Heart left ventricle (tissue), 16 donors: ENCODE measurements at regions of chr1 and their contacts with region 1.

Region 1: DNA sequence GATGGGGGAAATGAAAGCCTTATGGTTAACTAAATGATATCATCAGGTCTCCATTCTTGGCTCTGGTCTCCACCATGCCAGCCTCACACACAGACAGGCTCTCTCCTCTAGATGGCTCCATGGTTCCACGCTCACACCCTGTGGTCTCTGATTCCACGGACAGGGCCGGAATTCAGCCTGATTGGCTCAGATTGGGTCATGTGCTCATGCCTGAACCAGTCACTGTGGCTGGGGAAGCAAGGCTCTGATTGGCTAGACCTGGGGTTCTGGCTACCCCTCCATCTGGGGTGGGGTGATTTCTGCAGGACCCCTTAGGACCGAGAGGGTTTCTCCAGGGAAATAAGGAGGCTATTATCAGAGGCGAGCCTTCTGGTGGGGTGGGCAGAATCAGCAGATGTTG is 277.0 kb downstream of the PTPRU start:
- DNase-seq: peak in 2 of 5 donors; percentile 47 to 59
- ATAC-seq: peak; percentile 75 to 94 (median 84)
- H3K4me3 ChIP-seq: no peak overlapping the region
- H3K27ac ChIP-seq: no peak overlapping the region
- H3K4me1 ChIP-seq: no peaks in the 10 kb centered on the region
- H3K27me3 ChIP-seq: peaks cover 0 to 18% (median 6%) of the 10 kb centered on the region in 9 donors
- CTCF ChIP-seq: peak in 11 of 12 donors; percentile 14 to 60 (median 44)
- POLR2A ChIP-seq: no peak

Region 2: DNA sequence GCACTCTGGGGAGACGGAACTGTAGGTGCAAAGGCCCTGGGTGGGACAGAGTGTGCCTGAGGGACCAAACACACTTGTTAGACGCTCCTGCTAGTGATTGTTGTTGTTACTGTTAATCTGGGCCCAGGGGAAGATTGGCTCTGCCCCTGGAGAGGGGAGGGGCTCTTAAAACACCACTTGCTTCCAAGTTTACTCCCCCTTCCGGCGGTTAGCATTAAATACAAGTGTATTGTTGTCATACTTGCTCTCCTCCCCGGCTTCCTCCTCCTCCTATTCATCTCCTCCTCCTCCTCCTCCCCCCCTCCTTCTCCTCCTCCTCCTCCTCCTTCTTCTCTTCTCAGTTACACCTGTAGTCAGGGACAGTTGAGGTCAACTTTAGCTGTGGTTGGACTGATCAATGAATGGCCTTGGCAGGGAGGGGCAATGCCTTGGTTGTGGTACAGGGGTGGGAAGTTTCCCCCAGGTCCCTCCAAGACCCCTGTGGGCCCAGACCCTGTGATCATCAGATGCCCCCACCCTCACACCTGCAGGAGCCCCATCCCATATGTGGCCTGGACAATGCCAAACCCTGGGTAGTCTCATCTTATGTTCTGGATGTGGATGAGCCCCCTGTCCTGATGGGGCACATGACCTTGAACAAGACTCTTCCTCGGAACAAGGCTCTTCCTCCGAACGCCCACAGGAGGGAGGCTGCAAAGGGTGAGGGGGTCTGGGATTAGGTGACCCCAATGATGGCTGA is 59.7 kb before region 1 on chr1:
- intact Hi-C with region 1: loop called in 1 of 10 experiments (anchors 10 kb)
- DNase-seq: no peak
- ATAC-seq: peak in 1 of 4 donors; percentile 56
- H3K4me3 ChIP-seq: no peak overlapping the region
- H3K27ac ChIP-seq: no peak overlapping the region
- H3K4me1 ChIP-seq: no peaks in the 10 kb centered on the region
- H3K27me3 ChIP-seq: peaks cover 0 to 28% (median 0%) of the 10 kb centered on the region in 9 donors
- CTCF ChIP-seq: peak in 7 of 12 donors; percentile 7 to 38 (median 21)
- POLR2A ChIP-seq: no peak

Region 3: GRCh38 chr1:30085811-30086770 is 572.7 kb after region 1 on chr1:
- intact Hi-C with region 1: loop called in 1 of 10 experiments (anchors 10 kb)
- DNase-seq: peak in 4 of 5 donors; percentile 47 to 80 (median 56)
- ATAC-seq: peak in 3 of 4 donors; percentile 27 to 59 (median 47)
- H3K4me3 ChIP-seq: peak overlapping the region in 4 of 12 donors; percentile 5 to 39 (median 29)
- H3K27ac ChIP-seq: peak overlapping the region in 1 of 12 donors; percentile 4
- H3K4me1 ChIP-seq: peaks cover 4 to 42% (median 24%) of the 10 kb centered on the region in 12 donors
- H3K27me3 ChIP-seq: peaks cover 0 to 18% (median 0%) of the 10 kb centered on the region in 9 donors
- CTCF ChIP-seq: peak; percentile 31 to 76 (median 61)
- POLR2A ChIP-seq: no peak

Region 4: DNA sequence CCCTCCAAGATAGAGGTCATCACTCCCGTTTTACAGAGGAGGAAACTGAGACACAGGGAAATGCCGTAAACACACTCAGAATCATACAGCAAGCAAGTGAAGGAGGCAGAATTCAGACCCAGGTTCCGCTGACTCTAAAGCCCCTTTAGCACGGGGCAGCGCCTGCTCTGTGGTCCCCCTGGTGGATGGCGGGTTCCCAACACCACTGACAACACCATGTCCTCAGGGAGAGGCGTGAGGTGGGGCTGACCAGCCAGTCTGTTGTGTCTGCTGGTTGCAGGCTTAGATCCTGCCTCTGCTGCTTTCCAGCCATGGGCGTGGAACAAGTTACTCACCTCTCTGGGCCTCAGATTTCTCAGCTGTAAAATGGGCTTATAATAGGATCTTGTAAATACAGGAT is 592.8 kb after region 1 on chr1:
- intact Hi-C with region 1: loop called in 5 of 10 experiments (anchors 5 to 10 kb)
- DNase-seq: peak in 1 of 5 donors; percentile 28
- ATAC-seq: peak in 3 of 4 donors; percentile 35 to 70 (median 65)
- H3K4me3 ChIP-seq: no peak overlapping the region
- H3K27ac ChIP-seq: no peak overlapping the region
- H3K4me1 ChIP-seq: no peaks in the 10 kb centered on the region
- H3K27me3 ChIP-seq: peaks cover 0 to 67% (median 11%) of the 10 kb centered on the region in 9 donors
- CTCF ChIP-seq: peak; percentile 19 to 65 (median 35)
- POLR2A ChIP-seq: no peak

Region 5: DNA sequence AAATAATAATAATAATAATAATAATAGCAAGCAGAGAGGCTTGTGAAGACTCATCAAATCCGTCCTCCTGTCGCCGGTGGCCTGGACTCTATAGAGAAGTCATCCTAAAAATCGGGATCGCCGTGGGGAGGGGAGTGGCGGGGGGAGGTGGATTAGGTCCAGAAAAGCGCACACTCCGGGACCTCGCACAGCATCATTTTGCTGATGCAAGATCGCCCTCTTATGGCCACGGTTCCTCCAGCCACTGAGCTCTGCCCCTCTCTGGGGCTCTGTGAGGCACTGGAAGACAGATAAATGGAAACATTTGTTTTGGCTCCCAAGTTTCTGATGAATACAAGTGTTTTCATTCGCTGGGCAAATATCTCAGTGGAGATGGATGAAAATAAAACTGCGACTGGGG is 598.1 kb after region 1 on chr1:
- intact Hi-C with region 1: loop called in 5 of 10 experiments (anchors 5 to 10 kb)
- DNase-seq: peak in 3 of 5 donors; percentile 35 to 43 (median 39)
- ATAC-seq: peak in 3 of 4 donors; percentile 75 to 78 (median 76)
- H3K4me3 ChIP-seq: no peak overlapping the region
- H3K27ac ChIP-seq: no peak overlapping the region
- H3K4me1 ChIP-seq: no peaks in the 10 kb centered on the region
- H3K27me3 ChIP-seq: peaks cover 0 to 67% (median 16%) of the 10 kb centered on the region in 9 donors
- CTCF ChIP-seq: peak; percentile 39 to 70 (median 58)
- POLR2A ChIP-seq: no peak